PC-9 (cell line): ENCODE measurements at regions of chr6 and their contacts with region 1.

Region 1: DNA sequence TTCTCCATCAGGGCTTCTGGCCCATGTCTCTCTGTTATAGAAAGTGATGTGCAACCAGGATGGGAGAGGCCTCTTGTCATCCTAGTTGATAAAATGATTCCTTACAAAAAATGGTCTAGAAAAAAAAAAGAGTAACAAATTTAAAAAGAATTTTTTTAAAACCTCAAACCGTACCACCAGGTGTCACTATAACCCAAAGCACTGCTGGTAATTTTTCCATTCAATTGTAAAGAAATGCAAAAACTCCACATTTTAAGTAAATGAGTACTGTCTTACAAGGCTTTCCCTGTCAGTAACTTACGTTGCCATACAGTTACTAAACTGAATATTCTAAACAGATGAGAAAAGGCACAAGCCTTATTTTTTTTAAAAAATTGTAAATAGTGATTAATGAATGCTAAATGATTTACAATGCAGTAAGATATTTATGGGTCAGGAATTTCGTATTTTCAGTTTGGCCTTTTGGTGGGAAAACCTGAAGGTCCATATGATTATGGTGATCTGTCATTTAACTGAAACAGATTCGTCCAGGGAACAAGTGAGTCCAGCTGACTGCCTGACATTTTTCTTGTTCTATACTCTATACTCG is 95.4 kb downstream of the OGFRL1 start:
- DNase-seq: peak; percentile 30 to 52
- H3K4me3 ChIP-seq: no peak overlapping the region
- H3K27ac ChIP-seq: no peak overlapping the region
- H3K4me1 ChIP-seq: peaks cover 41% of the 10 kb centered on the region
- H3K27me3 ChIP-seq: no peaks in the 10 kb centered on the region
- CTCF ChIP-seq: peak; percentile 88

Region 2: DNA sequence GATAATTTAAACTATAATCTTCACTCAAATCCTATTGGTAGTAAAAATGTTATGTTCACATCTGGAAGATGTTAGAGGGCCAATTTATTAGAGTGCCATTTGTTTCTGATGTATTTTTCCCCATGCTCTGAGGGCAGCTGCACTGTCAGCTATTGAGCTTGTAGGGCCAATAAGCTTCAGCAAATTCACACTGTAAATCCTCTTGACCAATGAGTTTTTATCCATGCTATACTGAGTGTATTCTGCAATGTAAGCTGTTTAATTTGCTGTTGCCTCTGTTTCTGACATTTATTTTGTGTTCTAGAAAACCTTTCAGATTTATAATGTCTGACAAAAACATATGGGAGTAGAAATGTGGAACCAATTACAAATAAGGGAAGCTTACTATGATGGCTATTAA is 32.8 kb before region 1 on chr6:
- CTCF ChIA-PET with region 1: no interaction called
- POLR2A ChIA-PET with region 1: no interaction called
- intact Hi-C with region 1: no loop called
- DNase-seq: no peak
- H3K4me3 ChIP-seq: no peak overlapping the region
- H3K27ac ChIP-seq: no peak overlapping the region
- H3K4me1 ChIP-seq: no peaks in the 10 kb centered on the region
- H3K27me3 ChIP-seq: no peaks in the 10 kb centered on the region
- CTCF ChIP-seq: no peak

Region 3: DNA sequence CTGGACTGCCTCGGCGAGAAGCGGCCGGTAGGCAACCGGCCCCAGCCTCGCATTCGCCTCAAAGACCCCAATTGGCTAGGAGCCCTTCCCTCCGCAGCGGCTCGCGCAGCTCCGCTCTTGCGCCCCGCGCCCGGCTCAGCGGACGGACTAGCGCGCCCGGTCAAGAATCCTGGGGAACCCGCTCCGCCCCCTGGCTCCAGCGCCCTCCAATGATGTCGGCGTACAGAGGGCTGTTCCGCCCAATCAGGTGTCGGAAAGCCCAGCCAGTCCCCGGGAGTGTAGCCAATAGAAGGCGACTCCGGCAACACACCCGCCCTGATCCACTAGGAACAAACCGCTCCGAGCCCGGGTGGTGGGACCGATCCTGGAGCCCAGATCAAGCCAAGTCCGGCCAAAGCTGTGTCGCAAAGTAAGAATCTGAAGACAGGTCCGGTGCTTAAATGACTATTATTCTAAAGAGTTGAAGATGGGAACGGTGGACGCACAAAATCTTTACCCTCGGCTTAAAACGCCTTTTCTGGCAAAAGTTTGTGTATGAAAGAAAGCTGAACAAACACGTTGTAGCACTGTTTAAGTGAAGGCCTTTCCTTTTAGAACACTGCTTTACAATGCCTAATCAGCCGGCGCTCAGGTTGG is 36.8 kb after region 1 on chr6:
- CTCF ChIA-PET with region 1: no interaction called
- POLR2A ChIA-PET with region 1: interaction called, 5 read pairs
- intact Hi-C with region 1: loop called (anchors 1 kb)
- DNase-seq: peak; percentile 89 to 96
- H3K4me3 ChIP-seq: peak overlapping the region; percentile 81
- H3K27ac ChIP-seq: peak overlapping the region; percentile 48
- H3K4me1 ChIP-seq: peaks cover 30% of the 10 kb centered on the region
- H3K27me3 ChIP-seq: no peaks in the 10 kb centered on the region
- CTCF ChIP-seq: no peak

Region 4: DNA sequence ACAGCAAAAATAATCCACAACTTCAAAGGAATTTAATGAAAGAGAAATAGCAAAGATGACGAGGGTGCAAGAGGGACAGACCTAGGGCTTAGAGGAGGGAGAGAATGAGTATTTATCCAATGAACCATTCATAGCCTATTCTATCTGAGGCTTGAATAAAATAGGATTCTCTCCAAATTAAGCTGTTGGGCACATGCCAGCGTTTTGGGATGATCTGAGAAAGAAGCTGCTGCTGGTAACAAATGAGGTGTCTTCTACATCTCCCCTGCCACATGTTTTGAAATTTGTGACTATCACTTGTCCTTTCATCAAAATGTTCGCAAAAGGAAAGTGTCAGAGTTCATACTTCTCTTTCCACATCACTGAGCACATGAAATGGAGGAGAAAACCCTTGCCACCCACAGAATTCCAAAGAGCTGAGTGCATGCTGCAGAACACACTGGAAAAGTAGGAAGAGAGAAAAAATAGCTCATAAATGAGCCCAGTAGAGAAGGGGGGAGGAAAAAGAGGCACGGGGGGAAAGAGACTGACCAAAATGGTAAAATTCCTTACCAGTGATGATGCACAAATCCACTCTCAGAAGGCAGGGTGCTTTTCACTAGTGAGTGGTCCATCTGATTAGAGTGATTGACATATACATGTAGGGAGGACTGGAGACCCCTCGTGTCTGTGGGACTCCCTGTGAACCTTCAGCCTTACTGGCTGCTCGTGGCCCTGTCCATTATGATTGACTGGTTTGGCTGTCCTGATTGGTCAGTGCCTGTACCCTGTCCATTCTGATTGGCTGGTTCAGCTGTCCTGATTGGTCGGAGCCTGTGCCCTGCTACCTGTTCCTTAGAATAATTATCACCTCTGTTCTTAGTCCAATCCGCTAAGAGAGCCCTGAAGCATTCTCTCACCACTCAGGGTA is 85.1 kb after region 1 on chr6:
- CTCF ChIA-PET with region 1: no interaction called
- POLR2A ChIA-PET with region 1: interaction called, 11 read pairs
- intact Hi-C with region 1: no loop called
- DNase-seq: peak; percentile 53 to 67
- H3K4me3 ChIP-seq: no peak overlapping the region
- H3K27ac ChIP-seq: no peak overlapping the region
- H3K4me1 ChIP-seq: peaks cover 6% of the 10 kb centered on the region
- H3K27me3 ChIP-seq: no peaks in the 10 kb centered on the region
- CTCF ChIP-seq: no peak

Region 5: GRCh38 chr6:71544028-71544427 is 160.0 kb after region 1 on chr6:
- CTCF ChIA-PET with region 1: no interaction called
- POLR2A ChIA-PET with region 1: no interaction called
- intact Hi-C with region 1: no loop called
- DNase-seq: peak; percentile 33 to 76
- H3K4me3 ChIP-seq: no peak overlapping the region
- H3K27ac ChIP-seq: no peak overlapping the region
- H3K4me1 ChIP-seq: peaks cover 6% of the 10 kb centered on the region; the same call in 1 of the 2 replicates
- H3K27me3 ChIP-seq: no peaks in the 10 kb centered on the region
- CTCF ChIP-seq: no peak

Region 6: GRCh38 chr6:71602385-71603007 is 218.5 kb after region 1 on chr6:
- CTCF ChIA-PET with region 1: no interaction called
- POLR2A ChIA-PET with region 1: no interaction called
- intact Hi-C with region 1: loop called (anchors 10 kb)
- DNase-seq: peak; percentile 11 to 80
- H3K4me3 ChIP-seq: no peak overlapping the region
- H3K27ac ChIP-seq: 0 out of 2 replicates have a peak overlapping the region, but pooled peaks have one; percentile 8
- H3K4me1 ChIP-seq: peaks cover 12% of the 10 kb centered on the region; the same call in 1 of the 2 replicates
- H3K27me3 ChIP-seq: no peaks in the 10 kb centered on the region
- CTCF ChIP-seq: no peak

Region 7: DNA sequence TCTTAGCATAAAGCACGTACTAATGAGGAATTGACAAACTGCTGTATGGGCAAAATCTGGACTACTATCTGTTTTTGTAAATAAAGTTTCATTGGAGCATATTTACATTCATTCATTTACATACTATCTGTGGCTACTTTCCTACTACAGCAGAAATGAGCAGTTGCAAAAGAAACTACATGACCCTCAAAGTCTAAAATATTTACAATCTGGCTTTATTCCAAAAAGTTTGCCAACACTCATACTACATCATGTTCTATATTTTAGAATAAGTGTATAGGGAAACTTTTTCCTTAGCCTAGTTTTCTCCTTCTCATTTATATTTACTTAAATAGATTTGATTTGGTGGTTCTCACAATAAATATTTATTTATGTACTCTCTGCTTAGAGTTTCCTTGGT is 710.5 kb after region 1 on chr6:
- CTCF ChIA-PET with region 1: no interaction called
- POLR2A ChIA-PET with region 1: interaction called, 10 read pairs
- intact Hi-C with region 1: no loop called
- DNase-seq: no peak
- H3K4me3 ChIP-seq: no peak overlapping the region
- H3K27ac ChIP-seq: no peak overlapping the region
- H3K4me1 ChIP-seq: no peaks in the 10 kb centered on the region
- H3K27me3 ChIP-seq: no peaks in the 10 kb centered on the region
- CTCF ChIP-seq: no peak